T-cell (primary cell): ENCODE measurements at regions of chr5 and their contacts with region 1.

Region 1: GRCh38 chr5:14534773-14535172 is 46.8 kb upstream of the OTULINL start:
- DNase-seq: no peak
- ATAC-seq: no peak
- H3K4me3 ChIP-seq: no peak overlapping the region
- H3K4me3 Mint-ChIP-seq: no peak overlapping the region
- H3K27ac ChIP-seq: no peak overlapping the region
- H3K27ac Mint-ChIP-seq: no peak overlapping the region
- H3K4me1 ChIP-seq: no peaks in the 10 kb centered on the region
- H3K4me1 Mint-ChIP-seq: peaks cover 2 to 5% (median 2%) of the 10 kb centered on the region in 3 donors
- H3K27me3 ChIP-seq: no peaks in the 10 kb centered on the region
- H3K27me3 Mint-ChIP-seq: no peaks in the 10 kb centered on the region

Region 2: GRCh38 chr5:14491015-14491915 is 43.5 kb before region 1 on chr5:
- CTCF ChIA-PET with region 1: no interaction called
- POLR2A ChIA-PET with region 1: no interaction called
- DNase-seq: no peak
- ATAC-seq: no peak
- H3K4me3 ChIP-seq: no peak overlapping the region
- H3K4me3 Mint-ChIP-seq: no peak overlapping the region
- H3K27ac ChIP-seq: no peak overlapping the region
- H3K27ac Mint-ChIP-seq: no peak overlapping the region
- H3K4me1 ChIP-seq: no peaks in the 10 kb centered on the region
- H3K4me1 Mint-ChIP-seq: peaks cover 0 to 2% (median 0%) of the 10 kb centered on the region in 3 donors
- H3K27me3 ChIP-seq: peaks cover 0 to 2% of the 10 kb centered on the region in 2 experiments
- H3K27me3 Mint-ChIP-seq: no peaks in the 10 kb centered on the region

Region 3: GRCh38 chr5:14556015-14556414 is 21.2 kb after region 1 on chr5:
- CTCF ChIA-PET with region 1: no interaction called
- POLR2A ChIA-PET with region 1: interaction called in 1 of 2 experiments, 10 read pairs
- DNase-seq: no peak
- ATAC-seq: no peak
- H3K4me3 ChIP-seq: no peak overlapping the region
- H3K4me3 Mint-ChIP-seq: no peak overlapping the region
- H3K27ac ChIP-seq: no peak overlapping the region
- H3K27ac Mint-ChIP-seq: no peak overlapping the region
- H3K4me1 ChIP-seq: peaks cover 8 to 19% of the 10 kb centered on the region in 2 experiments
- H3K4me1 Mint-ChIP-seq: peaks cover 19 to 27% (median 19%) of the 10 kb centered on the region in 3 donors
- H3K27me3 ChIP-seq: peaks cover 0 to 10% of the 10 kb centered on the region in 2 experiments
- H3K27me3 Mint-ChIP-seq: peaks cover 4 to 8% of the 10 kb centered on the region in 2 donors